ENCODE measurements at regions of chr19 and their contacts with region 1.

Region 1: DNA sequence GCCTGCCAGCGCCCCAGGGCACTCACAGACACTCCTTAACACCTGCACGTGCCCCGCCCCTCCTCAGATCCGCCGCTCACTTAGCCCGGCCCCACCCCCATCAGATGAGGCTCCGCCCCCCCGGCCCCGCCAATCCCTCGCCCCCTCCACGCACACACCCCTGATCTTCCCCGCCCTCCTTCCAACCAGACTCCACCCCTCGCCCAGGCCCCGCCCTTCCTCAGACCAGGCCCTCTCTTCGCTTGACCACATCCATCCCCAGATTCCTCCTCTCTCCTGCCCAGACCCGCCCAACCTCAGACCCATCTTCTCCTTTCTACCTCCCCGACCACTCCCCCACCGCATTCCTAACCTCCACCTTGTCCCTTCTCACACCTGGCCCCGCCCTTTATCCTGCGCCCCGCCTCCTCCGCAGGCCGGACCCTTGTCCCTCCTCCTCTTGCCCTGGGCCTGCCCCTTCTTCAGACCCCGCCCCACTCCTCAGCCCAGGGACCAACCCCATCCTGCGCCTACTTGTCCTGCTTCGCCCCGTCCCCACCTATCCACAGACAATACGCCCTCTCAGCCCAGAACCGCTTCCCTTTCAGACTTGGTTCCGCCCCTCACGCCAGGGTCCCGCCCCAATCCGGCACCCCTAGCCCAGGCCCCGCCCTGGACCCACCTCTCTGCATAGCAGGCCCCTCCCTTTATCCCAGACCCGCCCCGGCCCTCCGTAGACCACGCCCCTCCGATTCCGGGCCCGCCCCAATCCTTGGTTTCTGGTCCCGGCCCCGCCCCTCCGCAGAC is 452 bp upstream of the KLHL26 start:
- DNase-seq: peak; percentile 100
- ATAC-seq: peak; percentile 92
- H3K4me3 Mint-ChIP-seq: peak overlapping the region; percentile 84
- H3K27ac Mint-ChIP-seq: peak overlapping the region; percentile 78
- H3K4me1 Mint-ChIP-seq: peaks cover 24% of the 10 kb centered on the region
- H3K27me3 Mint-ChIP-seq: no peaks in the 10 kb centered on the region

Region 2: DNA sequence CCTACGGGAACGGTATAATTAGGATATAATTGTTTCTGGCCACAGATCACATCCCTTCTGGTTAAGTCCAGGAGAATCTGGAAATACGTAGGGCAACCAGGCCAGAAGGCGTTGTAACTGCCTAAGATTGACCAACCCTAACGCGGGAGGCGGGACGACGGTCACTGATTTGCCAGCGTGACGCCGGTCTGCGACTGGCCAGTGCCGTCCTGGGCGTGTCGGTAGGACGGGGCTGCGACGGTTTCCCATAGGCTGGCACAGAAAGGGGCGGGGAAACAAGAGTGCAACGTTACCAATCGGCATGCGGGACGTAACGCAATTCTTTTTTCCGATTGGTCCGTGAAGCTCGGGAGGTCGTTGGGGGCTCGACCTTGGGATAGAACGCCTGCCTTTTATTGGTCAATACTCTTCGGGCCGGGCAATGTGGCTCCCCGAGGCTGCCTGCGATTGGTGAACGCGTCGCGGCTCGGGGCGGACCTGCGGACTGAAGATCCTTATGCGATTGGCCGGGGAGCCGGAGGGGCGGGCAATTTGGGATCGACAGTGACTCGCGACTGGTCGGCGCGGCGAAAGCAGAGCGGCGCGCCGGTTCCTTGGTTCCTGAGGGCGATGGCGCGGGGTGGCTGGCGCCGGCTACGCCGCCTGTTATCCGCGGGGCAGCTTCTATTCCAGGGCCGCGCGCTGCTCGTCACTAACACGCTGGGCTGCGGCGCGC is 443.5 kb before region 1 on chr19 and contains the start of gene MPV17L2:
- CTCF ChIA-PET with region 1: no interaction called
- POLR2A ChIA-PET with region 1: no interaction called
- intact Hi-C with region 1: loop called in 1 of 2 experiments (anchors 1 kb)
- DNase-seq: peak; percentile 99
- ATAC-seq: peak; percentile 95
- H3K4me3 Mint-ChIP-seq: peak within 1 kb of the TSS; percentile 79
- H3K27ac Mint-ChIP-seq: peak within 1 kb of the TSS; percentile 91
- H3K4me1 Mint-ChIP-seq: peaks cover 22% of the 10 kb centered on the region
- H3K27me3 Mint-ChIP-seq: no peaks in the 10 kb centered on the region
- total RNA-seq, gene MPV17L2: 5.7 to 6.2 TPM

Region 3: DNA sequence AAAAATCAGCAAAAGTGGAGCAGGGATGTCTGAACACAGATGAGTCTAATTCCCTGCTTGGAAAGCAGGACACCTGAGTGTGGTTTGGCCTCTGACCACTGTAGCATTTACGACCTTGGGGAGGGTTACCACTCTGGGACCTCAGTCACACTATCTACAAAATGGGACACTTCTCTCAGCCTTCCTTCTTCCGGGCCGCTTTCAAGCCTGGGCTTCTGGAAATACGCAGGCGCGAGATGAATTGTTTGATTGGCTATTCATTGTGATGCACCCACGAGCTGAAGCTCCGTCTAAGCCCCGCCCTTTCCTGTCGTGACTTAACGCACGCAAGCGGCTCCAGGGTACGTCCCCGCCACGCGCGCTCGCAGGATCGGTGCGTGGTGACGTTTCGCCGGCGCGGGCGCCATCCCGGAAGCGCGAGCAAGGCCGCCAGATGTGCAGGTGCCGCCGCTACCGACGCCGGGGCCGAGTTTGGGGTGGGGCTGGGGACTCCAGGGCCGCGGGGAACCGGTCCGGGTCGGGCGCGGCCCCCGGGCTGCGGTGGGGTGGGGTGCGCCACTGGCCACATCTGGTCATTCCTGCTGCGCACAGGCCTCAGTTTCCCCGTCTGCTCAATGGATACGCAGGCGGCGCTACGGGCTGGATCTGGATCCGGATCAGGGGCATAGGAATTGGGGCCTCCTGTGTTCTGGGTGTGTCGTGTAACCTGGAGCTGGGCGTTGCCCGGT is 78.7 kb before region 1 on chr19 and contains the start of gene KXD1:
- CTCF ChIA-PET with region 1: interaction called, 3 read pairs
- POLR2A ChIA-PET with region 1: no interaction called
- intact Hi-C with region 1: loop called (anchors 1 kb)
- DNase-seq: peak; percentile 99
- ATAC-seq: peak; percentile 99
- H3K4me3 Mint-ChIP-seq: peak within 1 kb of the TSS; percentile 91
- H3K27ac Mint-ChIP-seq: peak within 1 kb of the TSS; percentile 95
- H3K4me1 Mint-ChIP-seq: peaks cover 20% of the 10 kb centered on the region
- H3K27me3 Mint-ChIP-seq: no peaks in the 10 kb centered on the region
- total RNA-seq, gene KXD1: 121 to 170 TPM

Region 4: GRCh38 chr19:18683213-18683939 is 47.0 kb after region 1 on chr19 and contains the start of gene CRTC1:
- CTCF ChIA-PET with region 1: no interaction called
- POLR2A ChIA-PET with region 1: no interaction called
- intact Hi-C with region 1: loop called (anchors 1 kb)
- DNase-seq: peak; percentile 95
- ATAC-seq: peak; percentile 91
- H3K4me3 Mint-ChIP-seq: peak within 1 kb of the TSS; percentile 83
- H3K27ac Mint-ChIP-seq: peak within 1 kb of the TSS; percentile 89
- H3K4me1 Mint-ChIP-seq: peaks cover 16% of the 10 kb centered on the region
- H3K27me3 Mint-ChIP-seq: no peaks in the 10 kb centered on the region
- total RNA-seq, gene CRTC1: 5.3 to 9.7 TPM

Region 5: GRCh38 chr19:18879579-18880373 is 243.4 kb after region 1 on chr19:
- CTCF ChIA-PET with region 1: no interaction called
- POLR2A ChIA-PET with region 1: no interaction called
- intact Hi-C with region 1: loop called in 1 of 2 experiments (anchors 1 kb)
- DNase-seq: peak; percentile 63
- ATAC-seq: peak; percentile 77
- H3K4me3 Mint-ChIP-seq: no peak overlapping the region
- H3K27ac Mint-ChIP-seq: no peak overlapping the region
- H3K4me1 Mint-ChIP-seq: no peaks in the 10 kb centered on the region
- H3K27me3 Mint-ChIP-seq: no peaks in the 10 kb centered on the region

Region 6: DNA sequence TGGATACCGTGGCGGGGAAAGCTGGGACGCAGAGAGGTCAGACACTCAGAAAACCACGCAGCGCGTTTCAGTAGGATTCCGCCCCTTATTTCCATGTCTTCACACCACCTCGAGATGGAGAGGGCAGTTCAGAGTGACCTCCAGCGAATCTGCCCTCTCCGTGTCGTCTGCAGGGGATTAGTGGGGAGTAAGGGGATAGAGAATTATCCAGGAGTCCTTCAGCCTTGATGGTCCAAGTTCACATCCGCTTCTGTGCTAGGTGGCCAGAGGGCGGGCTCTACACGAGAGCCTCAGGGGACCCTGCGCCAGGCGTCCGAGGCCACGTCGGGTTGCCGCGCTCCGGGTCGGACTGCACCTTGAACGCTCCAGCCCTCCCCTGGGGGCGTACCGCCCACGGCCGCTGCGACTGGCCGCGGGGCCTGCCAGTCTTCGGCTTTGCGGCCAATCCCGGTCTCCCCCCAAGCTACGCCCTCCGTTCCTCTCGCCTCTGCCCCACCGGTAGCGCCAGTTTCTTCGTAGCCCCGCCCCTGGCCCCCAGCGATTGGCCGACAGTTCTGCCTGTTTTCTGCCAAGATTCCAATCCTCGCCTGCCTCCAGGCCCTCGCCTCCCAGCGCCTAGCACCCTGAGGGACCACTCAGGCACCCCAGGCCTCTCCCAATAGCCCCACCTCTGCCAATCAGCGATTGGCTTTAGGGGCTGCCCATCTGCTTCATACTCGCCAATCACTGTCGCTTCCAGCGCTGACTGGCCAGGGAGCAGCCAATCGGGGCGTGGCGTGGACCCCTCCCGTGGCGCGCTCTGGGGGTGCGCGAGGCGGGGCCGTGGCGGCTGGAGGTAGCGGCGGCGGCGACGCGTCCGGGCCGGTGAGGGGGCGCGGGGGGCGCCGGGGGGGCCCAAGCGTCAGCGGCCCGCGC is 427.1 kb after region 1 on chr19 and contains the start of gene SLC25A42:
- CTCF ChIA-PET with region 1: no interaction called
- POLR2A ChIA-PET with region 1: no interaction called
- intact Hi-C with region 1: loop called in 1 of 2 experiments (anchors 1 kb)
- DNase-seq: peak; percentile 99
- ATAC-seq: peak; percentile 96
- H3K4me3 Mint-ChIP-seq: peak within 1 kb of the TSS; percentile 75
- H3K27ac Mint-ChIP-seq: peak within 1 kb of the TSS; percentile 85
- H3K4me1 Mint-ChIP-seq: peaks cover 34% of the 10 kb centered on the region
- H3K27me3 Mint-ChIP-seq: no peaks in the 10 kb centered on the region
- total RNA-seq, gene SLC25A42: 10.4 to 10.6 TPM

Region 7: GRCh38 chr19:19404879-19405860 is 768.8 kb after region 1 on chr19 and contains the start of gene GATAD2A:
- CTCF ChIA-PET with region 1: no interaction called
- POLR2A ChIA-PET with region 1: no interaction called
- intact Hi-C with region 1: loop called in 1 of 2 experiments (anchors 5 kb)
- DNase-seq: peak; percentile 96
- ATAC-seq: peak; percentile 74
- H3K4me3 Mint-ChIP-seq: peak within 1 kb of the TSS; percentile 91
- H3K27ac Mint-ChIP-seq: peak within 1 kb of the TSS; percentile 95
- H3K4me1 Mint-ChIP-seq: peaks cover 69% of the 10 kb centered on the region
- H3K27me3 Mint-ChIP-seq: no peaks in the 10 kb centered on the region
- total RNA-seq, gene GATAD2A: 123 to 139 TPM

Measured in activated CD4-positive, alpha-beta T cell treated with anti-CD3 and anti-CD28 coated beads for 36 hours (primary cell).